BJ (cell line): ENCODE measurements at regions of chr11 and their contacts with region 1.

Region 1: GRCh38 chr11:103609117-103610066 is 427.0 kb upstream of the DDI1 start:
- DNase-seq: peak; percentile 66
- H3K4me3 ChIP-seq: no peak overlapping the region
- H3K27me3 ChIP-seq: no peaks in the 10 kb centered on the region
- CTCF ChIP-seq: peak; percentile 88

Region 2: GRCh38 chr11:103623933-103624332 is 14.5 kb after region 1 on chr11:
- CTCF ChIA-PET with region 1: interaction called, 10 read pairs
- POLR2A ChIA-PET with region 1: interaction called, 4 read pairs
- DNase-seq: no peak
- H3K4me3 ChIP-seq: no peak overlapping the region
- H3K27me3 ChIP-seq: no peaks in the 10 kb centered on the region
- CTCF ChIP-seq: no peak